CD4-positive, alpha-beta T cell (primary cell): ENCODE measurements at regions of chr16 and their contacts with region 1.

Region 1: DNA sequence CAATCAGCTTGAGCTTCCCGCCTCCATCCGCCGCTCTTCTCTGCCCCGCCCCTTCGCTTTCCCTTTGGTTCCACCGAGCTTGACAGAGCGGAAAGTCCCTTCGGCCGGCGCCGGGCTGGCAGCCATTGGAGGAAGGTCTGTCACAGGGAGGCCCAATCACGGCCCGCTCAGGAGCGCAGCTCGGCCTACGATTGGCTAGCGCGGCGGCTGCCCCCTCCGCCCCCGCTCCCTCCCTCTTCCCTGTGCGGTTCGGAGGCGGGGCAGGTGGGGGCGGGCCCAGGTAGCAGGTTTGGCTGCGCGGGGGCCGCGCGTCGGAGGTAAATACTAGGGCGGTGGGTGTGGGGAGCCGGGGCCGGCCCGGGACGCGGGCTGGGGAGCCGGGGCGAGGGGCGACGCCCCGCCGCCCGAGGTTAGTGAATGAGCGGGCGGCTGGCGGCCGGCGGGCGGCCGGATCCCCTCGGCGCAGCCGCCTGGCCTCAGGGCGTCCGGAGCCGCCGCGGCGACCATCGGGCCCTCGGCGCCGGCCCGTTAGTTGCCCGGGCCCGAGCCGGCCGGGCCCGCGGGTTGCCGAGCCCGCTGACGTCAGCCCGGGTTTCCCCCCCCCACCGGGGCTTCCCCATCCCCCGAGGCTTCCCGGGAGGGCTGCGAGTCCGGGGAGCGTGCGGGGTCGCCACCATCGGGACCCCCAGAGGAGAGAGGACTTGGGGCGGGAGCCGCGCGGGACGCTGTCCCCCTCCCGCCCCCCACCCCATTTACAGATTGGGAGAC is at the start of gene CYLD:
- DNase-seq: peak; percentile 98 to 100 (median 99)
- ATAC-seq: peak; percentile 88
- H3K4me3 ChIP-seq: peak within 1 kb of the TSS; percentile 80
- H3K4me3 Mint-ChIP-seq: peak within 1 kb of the TSS; percentile 99
- H3K27ac ChIP-seq: peak within 1 kb of the TSS; percentile 97 to 99
- H3K27ac Mint-ChIP-seq: peak within 1 kb of the TSS; percentile 87
- H3K4me1 ChIP-seq: peaks cover 15% of the 10 kb centered on the region
- H3K4me1 Mint-ChIP-seq: peaks cover 48% of the 10 kb centered on the region
- H3K27me3 ChIP-seq: no peaks in the 10 kb centered on the region
- H3K27me3 Mint-ChIP-seq: no peaks in the 10 kb centered on the region
- CTCF ChIP-seq: no peak
- total RNA-seq, gene CYLD: 360 to 373 TPM

Region 2: GRCh38 chr16:50152807-50153452 is 589.1 kb before region 1 on chr16 and contains the start of gene TENT4B:
- CTCF ChIA-PET with region 1: no interaction called
- POLR2A ChIA-PET with region 1: interaction called, 5 read pairs
- intact Hi-C with region 1: loop called in 1 of 2 experiments (anchors 10 kb)
- DNase-seq: peak; percentile 84 to 96 (median 90)
- ATAC-seq: peak; percentile 80
- H3K4me3 ChIP-seq: peak within 1 kb of the TSS; percentile 77
- H3K4me3 Mint-ChIP-seq: peak within 1 kb of the TSS; percentile 94
- H3K27ac ChIP-seq: peak within 1 kb of the TSS; percentile 84 to 90
- H3K27ac Mint-ChIP-seq: peak within 1 kb of the TSS; percentile 92
- H3K4me1 ChIP-seq: peaks cover 47% of the 10 kb centered on the region
- H3K4me1 Mint-ChIP-seq: peaks cover 38% of the 10 kb centered on the region
- H3K27me3 ChIP-seq: no peaks in the 10 kb centered on the region
- H3K27me3 Mint-ChIP-seq: no peaks in the 10 kb centered on the region
- CTCF ChIP-seq: no peak
- total RNA-seq, gene TENT4B: 32.9 to 35.0 TPM

Region 3: DNA sequence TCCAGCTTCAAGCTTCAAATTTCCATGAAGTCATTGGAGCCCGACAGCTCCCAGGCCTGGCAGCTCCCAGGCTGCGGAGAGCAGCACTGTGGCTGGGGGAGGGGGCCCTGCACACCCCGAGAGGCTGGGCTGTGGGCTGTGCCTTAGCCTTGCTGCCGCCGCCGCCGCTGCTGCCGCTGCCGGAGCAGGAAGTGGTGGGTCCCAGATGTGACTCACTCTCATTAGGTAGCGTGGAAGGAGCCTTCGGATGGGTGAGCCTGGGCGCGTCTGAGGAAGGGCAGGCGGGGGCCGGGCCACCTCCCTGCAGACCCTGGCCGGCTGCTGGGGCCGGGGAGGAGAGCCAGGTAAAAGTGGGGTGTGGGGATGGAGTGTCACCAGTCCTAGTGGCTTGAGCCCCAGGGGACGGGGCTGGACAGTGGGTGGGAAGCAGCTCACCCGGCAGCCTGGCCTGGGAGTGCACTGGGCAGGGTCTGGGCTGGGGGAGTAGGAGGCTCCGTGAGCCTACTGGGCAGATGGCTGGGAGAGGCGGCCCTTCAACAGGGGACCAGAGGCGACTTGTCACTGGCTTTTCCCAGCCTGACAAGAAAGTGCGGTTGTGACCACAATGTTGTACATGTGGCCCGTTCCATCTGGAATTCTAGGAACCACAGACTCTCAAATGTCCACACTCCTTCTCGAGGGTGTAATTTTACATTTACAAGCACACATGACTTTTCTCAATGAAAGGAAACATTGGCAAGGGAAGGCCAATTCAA is 475.5 kb before region 1 on chr16 and contains the start of gene ADCY7:
- CTCF ChIA-PET with region 1: no interaction called
- POLR2A ChIA-PET with region 1: interaction called, 4 read pairs
- intact Hi-C with region 1: loop called (anchors 2 to 5 kb)
- DNase-seq: peak; percentile 66 to 90 (median 86)
- ATAC-seq: peak; percentile 91
- H3K4me3 ChIP-seq: peak within 1 kb of the TSS; percentile 98
- H3K4me3 Mint-ChIP-seq: peak within 1 kb of the TSS; percentile 99
- H3K27ac ChIP-seq: peak within 1 kb of the TSS; percentile 87 to 97
- H3K27ac Mint-ChIP-seq: peak within 1 kb of the TSS; percentile 100
- H3K4me1 ChIP-seq: peaks cover 65% of the 10 kb centered on the region
- H3K4me1 Mint-ChIP-seq: peaks cover 73% of the 10 kb centered on the region
- H3K27me3 ChIP-seq: no peaks in the 10 kb centered on the region
- H3K27me3 Mint-ChIP-seq: no peaks in the 10 kb centered on the region
- CTCF ChIP-seq: no peak
- total RNA-seq, gene ADCY7: 136 to 147 TPM

Region 4: DNA sequence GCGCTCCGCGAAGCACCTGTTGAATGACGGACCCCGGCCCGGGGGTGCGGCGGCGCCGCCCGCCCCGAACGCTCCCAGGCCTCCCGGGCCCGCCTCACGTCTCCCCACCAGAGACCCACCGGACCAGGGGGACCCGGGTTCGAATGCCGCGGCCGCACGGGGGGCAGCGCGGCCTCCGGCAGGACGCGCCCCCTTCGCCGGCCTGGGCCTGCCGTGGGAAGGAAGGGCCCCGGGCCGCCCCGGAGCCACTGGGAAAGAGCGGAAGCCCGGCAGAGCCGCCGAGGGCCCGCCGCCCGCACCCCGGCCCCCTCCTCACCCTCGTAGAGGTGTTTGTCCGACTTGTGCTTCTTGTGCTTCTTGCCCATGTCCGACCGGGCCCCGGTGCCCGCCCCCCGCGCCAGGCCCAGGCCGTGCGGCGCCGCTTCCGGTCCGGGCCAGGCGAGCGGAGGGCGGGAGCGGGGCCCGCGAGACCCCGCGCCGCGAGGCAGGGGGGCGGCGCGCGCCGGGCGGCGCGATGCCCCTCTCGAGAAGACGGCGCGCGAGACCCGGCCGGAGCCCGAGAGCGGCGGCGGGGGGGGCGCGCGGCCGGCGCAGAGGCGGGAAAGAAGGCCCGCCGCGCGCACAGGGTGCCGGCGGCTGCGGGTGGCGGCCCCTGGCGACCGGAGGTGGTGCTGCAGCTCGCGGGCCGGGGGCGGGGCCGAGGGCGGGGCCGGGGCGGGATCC is 373.4 kb before region 1 on chr16 and contains the start of gene BRD7:
- CTCF ChIA-PET with region 1: no interaction called
- POLR2A ChIA-PET with region 1: interaction called, 4 read pairs
- intact Hi-C with region 1: loop called (anchors 2 to 5 kb)
- DNase-seq: peak; percentile 30 to 88 (median 70)
- ATAC-seq: peak; percentile 83
- H3K4me3 ChIP-seq: peak within 1 kb of the TSS; percentile 62
- H3K4me3 Mint-ChIP-seq: peak within 1 kb of the TSS; percentile 94
- H3K27ac ChIP-seq: peak within 1 kb of the TSS; percentile 15 to 52
- H3K27ac Mint-ChIP-seq: peak within 1 kb of the TSS; percentile 91
- H3K4me1 ChIP-seq: peaks cover 28% of the 10 kb centered on the region
- H3K4me1 Mint-ChIP-seq: peaks cover 58% of the 10 kb centered on the region
- H3K27me3 ChIP-seq: no peaks in the 10 kb centered on the region
- H3K27me3 Mint-ChIP-seq: no peaks in the 10 kb centered on the region
- CTCF ChIP-seq: no peak
- total RNA-seq, gene BRD7: 95.4 to 103 TPM

Region 5: GRCh38 chr16:50671644-50672260 is 70.2 kb before region 1 on chr16:
- CTCF ChIA-PET with region 1: interaction called, 15 read pairs
- POLR2A ChIA-PET with region 1: interaction called, 167 read pairs
- intact Hi-C with region 1: loop called in 1 of 2 experiments (anchors 2 kb)
- DNase-seq: peak in 11 of 14 experiments; percentile 26 to 76 (median 47)
- ATAC-seq: peak; percentile 25
- H3K4me3 ChIP-seq: no peak overlapping the region
- H3K4me3 Mint-ChIP-seq: peak overlapping the region; percentile 39
- H3K27ac ChIP-seq: no peak overlapping the region
- H3K27ac Mint-ChIP-seq: peak overlapping the region; percentile 74
- H3K4me1 ChIP-seq: peaks cover 31% of the 10 kb centered on the region
- H3K4me1 Mint-ChIP-seq: peaks cover 42% of the 10 kb centered on the region
- H3K27me3 ChIP-seq: no peaks in the 10 kb centered on the region
- H3K27me3 Mint-ChIP-seq: no peaks in the 10 kb centered on the region
- CTCF ChIP-seq: peak; percentile 63

Region 6: GRCh38 chr16:50696575-50697420 is 45.2 kb before region 1 on chr16:
- CTCF ChIA-PET with region 1: interaction called, 9 read pairs
- POLR2A ChIA-PET with region 1: interaction called, 23 read pairs
- intact Hi-C with region 1: no loop called
- DNase-seq: peak in 10 of 14 experiments; percentile 40 to 91 (median 56)
- ATAC-seq: peak; percentile 66
- H3K4me3 ChIP-seq: peak overlapping the region; percentile 58
- H3K4me3 Mint-ChIP-seq: peak overlapping the region; percentile 86
- H3K27ac ChIP-seq: peak overlapping the region; percentile 8 to 85
- H3K27ac Mint-ChIP-seq: peak overlapping the region; percentile 87
- H3K4me1 ChIP-seq: peaks cover 77% of the 10 kb centered on the region
- H3K4me1 Mint-ChIP-seq: peaks cover 75% of the 10 kb centered on the region
- H3K27me3 ChIP-seq: no peaks in the 10 kb centered on the region
- H3K27me3 Mint-ChIP-seq: no peaks in the 10 kb centered on the region
- CTCF ChIP-seq: no peak